Posterior cingulate gyrus (tissue), 11 donors: ENCODE measurements at regions of chr1 and their contacts with region 1.

Region 1: DNA sequence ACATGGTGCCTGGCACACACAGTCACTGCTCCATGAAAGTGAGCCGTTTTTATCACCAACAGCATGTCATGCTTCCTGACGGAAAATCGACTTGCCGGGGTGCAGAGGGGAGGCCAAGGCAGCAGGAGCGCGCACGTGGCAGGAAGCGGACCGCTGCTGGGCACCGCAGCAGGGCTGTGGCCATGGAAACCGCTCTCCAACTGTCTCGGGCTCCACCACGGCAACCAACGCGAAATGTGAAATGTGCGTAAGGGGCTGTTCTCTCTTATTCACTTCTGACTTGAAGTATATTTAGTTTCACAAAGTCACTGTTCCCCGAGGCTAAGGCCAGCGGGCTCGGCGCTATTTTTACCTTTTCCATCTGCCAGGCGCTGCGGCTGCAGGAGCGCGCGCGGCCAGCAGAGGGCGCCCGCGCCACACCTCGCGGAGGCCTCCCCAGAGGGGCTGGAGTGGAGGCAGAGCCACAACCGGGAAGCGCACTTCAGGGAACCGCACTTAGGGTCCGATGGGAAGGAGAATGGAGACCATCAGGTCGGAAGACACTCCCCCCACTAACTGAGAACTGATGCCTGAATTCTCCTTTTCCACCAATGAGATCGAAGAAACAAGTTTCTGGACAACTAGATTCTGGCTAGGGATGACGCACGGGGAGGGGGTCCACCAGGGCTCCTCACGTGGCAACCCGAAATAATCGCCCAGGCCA is 19.7 kb downstream of the RCC2 start:
- DNase-seq: peak; percentile 62 to 96 (median 76)

Region 2: DNA sequence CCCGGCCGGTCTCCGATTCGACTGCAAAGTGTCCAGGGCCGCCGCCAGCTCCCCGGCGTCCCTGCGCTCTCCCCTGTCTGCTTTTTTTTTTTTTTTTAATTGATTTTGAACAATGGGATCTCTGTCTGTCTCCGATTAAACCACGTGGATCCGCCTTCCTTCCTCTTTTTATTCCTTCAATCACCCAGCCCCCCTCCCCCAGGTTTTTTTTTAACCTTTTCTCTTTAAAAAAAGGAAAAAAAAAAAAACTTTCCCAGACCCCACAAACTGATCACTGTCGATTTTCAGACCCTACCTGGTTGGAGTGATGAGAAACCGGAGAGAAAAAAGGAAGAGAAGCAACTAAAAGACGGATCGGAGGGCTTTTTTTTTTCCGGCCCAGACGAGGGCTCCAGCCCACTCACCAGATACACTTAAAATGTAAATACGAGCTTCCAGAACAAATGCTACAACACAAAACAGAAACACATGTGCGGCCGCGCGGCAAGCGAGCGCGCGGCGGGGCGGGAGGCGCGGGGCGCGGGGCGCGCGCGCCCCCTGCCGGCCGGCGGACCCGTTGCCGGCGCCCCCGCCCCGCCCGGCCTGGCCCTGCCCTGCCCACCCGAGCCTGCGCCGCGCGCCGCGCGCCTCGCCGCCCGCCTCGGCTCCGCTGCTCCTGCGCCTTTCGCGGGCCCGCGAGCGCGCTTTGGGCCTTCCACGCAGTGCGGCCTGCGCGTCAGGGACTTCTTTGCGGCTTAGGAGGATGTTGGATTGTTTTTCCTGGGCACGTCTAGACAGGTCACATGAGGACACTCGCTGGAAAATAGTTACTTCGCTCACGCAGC is 19.7 kb after region 1 on chr1 and contains the start of gene RCC2:
- intact Hi-C with region 1: loop called (anchors 1 kb)
- DNase-seq: peak; percentile 25 to 96 (median 69)

Region 3: GRCh38 chr1:17606826-17607440 is 187.2 kb after region 1 on chr1:
- intact Hi-C with region 1: loop called (anchors 10 kb)
- DNase-seq: peak; percentile 49 to 95 (median 80)